ENCODE measurements at regions of chr12 and their contacts with region 1.

Region 1: DNA sequence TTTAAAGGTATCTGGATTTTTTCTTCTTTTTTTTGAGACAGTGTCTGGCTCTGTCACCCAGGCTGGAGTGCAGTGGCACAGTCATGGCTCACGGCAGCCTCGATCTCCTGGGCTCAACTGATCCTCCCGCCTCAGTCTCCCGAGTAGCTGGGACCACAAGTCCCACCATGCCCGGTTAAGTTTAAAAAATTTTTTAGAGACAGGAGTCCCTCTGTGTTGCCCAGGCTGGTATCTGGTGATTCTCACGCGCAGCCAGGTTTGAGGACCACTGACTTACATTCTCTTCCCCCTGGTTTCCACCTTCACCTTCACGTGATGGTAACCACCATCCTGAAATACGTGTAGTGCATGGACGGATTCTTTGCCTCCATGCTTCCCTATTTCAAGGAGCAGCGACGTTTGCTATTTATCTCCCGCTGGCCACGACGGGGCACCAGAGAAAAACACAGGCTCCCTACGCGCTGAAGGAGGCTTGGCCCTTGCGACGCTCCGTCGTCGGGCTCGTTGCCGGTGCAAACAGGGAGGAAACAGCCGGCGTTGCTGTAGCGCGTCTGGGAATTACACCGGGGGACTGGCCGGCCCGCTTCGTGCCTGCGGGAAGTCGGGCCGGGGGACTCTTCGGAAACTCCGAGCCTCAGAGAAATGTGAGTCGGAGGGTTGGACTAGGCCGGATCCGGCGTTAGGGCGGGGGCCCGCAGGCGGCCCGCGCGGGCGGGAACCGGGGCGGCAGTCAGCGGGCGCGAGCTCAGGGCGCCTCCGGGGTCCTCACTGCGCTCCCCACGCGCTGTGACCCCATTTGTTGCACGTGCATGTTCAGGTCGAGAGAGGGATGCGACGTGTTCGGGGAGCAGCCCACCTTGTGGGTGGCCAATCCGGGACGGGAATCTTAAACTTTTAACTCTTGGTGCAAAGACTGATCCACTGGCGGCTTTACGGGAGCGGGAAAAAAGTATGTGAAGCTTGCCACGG is at the start of gene TCHP:
- DNase-seq: peak; percentile 84
- ATAC-seq: peak; percentile 89
- H3K4me3 Mint-ChIP-seq: peak within 1 kb of the TSS; percentile 96
- H3K27ac Mint-ChIP-seq: peak within 1 kb of the TSS; percentile 99
- H3K4me1 Mint-ChIP-seq: peaks cover 12% of the 10 kb centered on the region
- H3K27me3 Mint-ChIP-seq: no peaks in the 10 kb centered on the region
- CTCF ChIP-seq: no peak
- total RNA-seq, gene TCHP: 19.9 to 21.0 TPM

Region 2: DNA sequence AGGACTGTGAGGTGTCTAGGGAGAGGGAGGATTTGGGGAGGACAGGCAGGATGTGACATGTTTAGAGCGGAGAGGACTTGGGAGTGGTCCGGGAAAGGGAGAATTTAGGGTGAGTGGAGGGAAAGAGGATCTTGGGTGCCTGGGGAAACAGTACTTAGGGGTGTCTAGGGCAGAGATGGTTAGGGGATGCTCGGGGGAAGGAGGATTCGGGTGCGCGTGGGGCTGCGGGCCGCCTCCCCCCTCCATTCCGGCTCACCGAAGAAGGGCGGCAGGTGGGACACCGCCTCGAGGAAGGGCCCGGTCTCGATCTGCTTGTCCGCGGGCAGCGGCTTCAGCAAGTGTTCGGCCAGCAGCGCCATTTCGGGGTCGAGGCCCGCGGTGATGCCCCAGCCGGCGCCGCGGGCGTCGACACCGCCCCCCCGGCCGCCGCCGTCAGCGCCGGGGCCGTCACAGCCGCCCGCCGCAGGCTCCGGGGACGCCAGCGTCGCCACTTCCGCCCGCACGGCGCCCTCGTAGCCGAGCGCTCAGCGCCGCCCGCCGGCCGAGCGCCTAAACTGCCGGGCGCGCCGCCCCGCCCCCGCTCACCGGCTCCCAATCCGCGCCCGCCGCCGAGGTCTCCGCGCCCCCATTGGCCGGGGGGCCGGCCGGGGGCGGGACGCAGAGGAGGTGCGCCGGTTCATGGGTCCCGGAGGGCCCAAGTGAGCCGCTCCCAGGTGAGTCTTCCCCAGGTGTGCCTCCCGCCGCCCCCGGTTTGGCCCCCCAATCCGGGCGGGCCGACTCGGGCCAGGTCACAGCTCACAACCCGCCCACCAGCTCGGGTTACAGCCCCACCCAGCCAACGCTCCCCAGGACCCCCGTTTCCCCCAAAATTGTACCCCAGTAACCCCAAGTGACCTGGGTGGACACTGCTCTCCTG is 19.8 kb before region 1 on chr12 and contains the start of gene GLTP:
- CTCF ChIA-PET with region 1: interaction called, 3 read pairs
- POLR2A ChIA-PET with region 1: interaction called, 10 read pairs
- intact Hi-C with region 1: no loop called
- DNase-seq: peak; percentile 85
- ATAC-seq: peak; percentile 98
- H3K4me3 Mint-ChIP-seq: peak within 1 kb of the TSS; percentile 96
- H3K27ac Mint-ChIP-seq: peak within 1 kb of the TSS; percentile 87
- H3K4me1 Mint-ChIP-seq: peaks cover 33% of the 10 kb centered on the region
- H3K27me3 Mint-ChIP-seq: no peaks in the 10 kb centered on the region
- CTCF ChIP-seq: peak; percentile 34
- total RNA-seq, gene GLTP: 19.9 to 21.2 TPM

Region 3: GRCh38 chr12:109888179-109889020 is 11.7 kb before region 1 on chr12:
- CTCF ChIA-PET with region 1: interaction called, 4 read pairs
- POLR2A ChIA-PET with region 1: interaction called, 19 read pairs
- intact Hi-C with region 1: no loop called
- DNase-seq: peak; percentile 44
- ATAC-seq: peak; percentile 71
- H3K4me3 Mint-ChIP-seq: peak overlapping the region; percentile 46
- H3K27ac Mint-ChIP-seq: peak overlapping the region; percentile 90
- H3K4me1 Mint-ChIP-seq: peaks cover 36% of the 10 kb centered on the region
- H3K27me3 Mint-ChIP-seq: no peaks in the 10 kb centered on the region
- CTCF ChIP-seq: no peak